ENCODE measurements at regions of chr10 and their contacts with region 1.

Region 1: GRCh38 chr10:10831085-10831484 is 186.6 kb upstream of the CELF2 start:
- DNase-seq: peak; percentile 96
- H3K4me3 ChIP-seq: peak overlapping the region in 1 of 3 experiments; percentile 2
- H3K27ac ChIP-seq: peak overlapping the region; percentile 98
- H3K4me1 ChIP-seq: peaks cover 23% of the 10 kb centered on the region
- H3K27me3 ChIP-seq: no peaks in the 10 kb centered on the region
- CTCF ChIP-seq: no peak
- POLR2A ChIP-seq: no peak

Region 2: DNA sequence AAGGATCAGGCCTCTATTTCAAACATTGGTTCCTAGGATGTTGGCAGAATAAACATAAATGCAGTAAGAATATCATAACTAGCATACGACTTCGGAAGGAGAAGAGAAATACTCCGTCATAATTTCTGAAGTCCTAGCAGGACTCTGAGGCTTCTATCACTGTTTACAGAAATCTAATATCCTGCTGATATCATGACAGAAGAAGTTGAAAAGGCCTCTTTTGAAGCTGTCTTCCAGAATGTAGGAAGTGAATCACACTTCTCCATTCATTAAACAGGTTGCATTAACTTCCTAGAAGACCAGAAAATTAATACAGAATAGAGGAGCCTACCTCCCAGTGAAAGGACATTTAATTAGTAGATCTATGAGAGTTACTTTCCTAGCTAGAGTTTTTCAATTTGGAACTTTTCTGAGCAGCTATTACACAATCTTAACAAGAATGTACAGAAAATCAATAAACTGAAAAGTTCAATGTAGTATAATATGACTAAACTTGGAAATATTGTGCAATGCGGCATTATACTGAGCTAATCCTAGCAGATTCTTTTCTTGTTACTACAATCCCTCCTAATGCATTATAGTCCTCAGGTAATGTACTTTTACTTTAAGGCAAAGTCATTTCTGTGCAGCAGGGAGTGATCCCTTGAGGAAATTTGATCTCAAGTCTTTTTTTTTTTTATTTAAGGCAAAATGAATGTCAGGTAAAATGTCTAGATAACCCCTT is 436.0 kb before region 1 on chr10:
- CTCF ChIA-PET with region 1: no interaction called
- POLR2A ChIA-PET with region 1: no interaction called
- dilution Hi-C with region 1: no loop called
- intact Hi-C with region 1: no loop called
- DNase-seq: no peak
- H3K4me3 ChIP-seq: no peak overlapping the region
- H3K27ac ChIP-seq: no peak overlapping the region
- H3K4me1 ChIP-seq: no peaks in the 10 kb centered on the region
- H3K27me3 ChIP-seq: no peaks in the 10 kb centered on the region
- CTCF ChIP-seq: no peak
- POLR2A ChIP-seq: no peak

Region 3: GRCh38 chr10:10677479-10677878 is 153.6 kb before region 1 on chr10:
- CTCF ChIA-PET with region 1: no interaction called
- POLR2A ChIA-PET with region 1: no interaction called
- dilution Hi-C with region 1: no loop called
- intact Hi-C with region 1: loop called (anchors 2 kb)
- DNase-seq: peak; percentile 50
- H3K4me3 ChIP-seq: no peak overlapping the region
- H3K27ac ChIP-seq: no peak overlapping the region
- H3K4me1 ChIP-seq: no peaks in the 10 kb centered on the region
- H3K27me3 ChIP-seq: no peaks in the 10 kb centered on the region
- CTCF ChIP-seq: peak; percentile 19 to 25
- POLR2A ChIP-seq: no peak

Region 4: DNA sequence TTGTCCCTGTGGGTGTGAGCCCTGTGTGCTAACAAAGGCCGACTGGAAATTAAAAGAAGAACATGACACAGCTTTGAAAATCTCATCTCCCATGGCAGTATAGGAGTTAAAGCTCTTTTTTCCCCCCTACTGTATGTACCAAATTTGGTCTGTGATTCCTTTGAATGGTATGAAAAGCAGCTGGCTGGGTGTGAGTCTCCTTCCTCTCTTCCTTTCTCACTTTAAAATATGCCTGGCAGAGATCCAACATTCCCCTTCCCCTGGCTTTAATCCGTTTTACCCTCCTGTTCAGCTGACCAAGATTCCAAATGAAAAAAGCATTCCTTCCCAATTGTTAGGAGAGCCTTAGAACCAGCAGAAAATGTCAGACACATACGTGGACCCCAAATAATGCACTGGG is 38.4 kb before region 1 on chr10:
- CTCF ChIA-PET with region 1: interaction called, 7 read pairs
- POLR2A ChIA-PET with region 1: interaction called, 9 read pairs
- dilution Hi-C with region 1: no loop called
- intact Hi-C with region 1: loop called (anchors 1 kb)
- DNase-seq: peak; percentile 89
- H3K4me3 ChIP-seq: no peak overlapping the region
- H3K27ac ChIP-seq: peak overlapping the region; percentile 98
- H3K4me1 ChIP-seq: peaks cover 43% of the 10 kb centered on the region
- H3K27me3 ChIP-seq: no peaks in the 10 kb centered on the region
- CTCF ChIP-seq: no peak
- POLR2A ChIP-seq: peak; percentile 53

Region 5: DNA sequence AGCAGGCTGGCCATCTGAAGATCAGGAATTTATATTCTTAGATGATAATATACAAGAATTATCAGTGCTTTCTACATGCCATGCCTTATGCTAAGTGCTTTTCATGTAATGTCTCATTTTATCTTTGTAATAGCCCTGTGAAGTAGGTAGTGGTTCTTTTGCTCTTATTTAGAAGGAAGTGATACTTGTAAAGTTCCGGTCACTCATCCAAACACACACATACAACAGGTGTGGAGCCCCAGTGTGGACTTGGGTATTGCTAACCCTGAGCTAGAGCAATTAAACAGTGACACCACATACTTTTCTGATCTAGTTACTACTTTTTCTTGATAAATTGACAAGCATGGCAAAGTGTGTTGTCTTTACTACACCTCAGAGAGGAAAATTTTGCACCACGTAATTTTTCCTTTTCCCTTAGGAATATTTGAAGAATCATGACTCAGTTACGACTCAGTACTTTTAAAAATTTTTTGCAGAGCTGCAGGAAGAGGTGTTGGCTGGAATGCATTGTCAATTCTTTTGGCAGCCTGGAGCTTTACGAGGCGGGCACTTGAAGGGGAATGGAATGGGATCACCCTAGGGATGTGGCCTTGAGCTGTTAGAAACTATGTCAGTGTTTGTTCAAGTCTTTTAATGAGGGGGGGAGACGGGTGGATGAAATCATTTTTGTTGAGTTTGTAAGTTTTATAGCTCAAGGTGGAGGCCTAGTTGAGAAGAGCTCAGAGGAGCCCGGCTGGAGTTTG is 25.9 kb before region 1 on chr10:
- CTCF ChIA-PET with region 1: interaction called, 11 read pairs
- POLR2A ChIA-PET with region 1: no interaction called
- dilution Hi-C with region 1: no loop called
- intact Hi-C with region 1: no loop called
- DNase-seq: peak; percentile 79
- H3K4me3 ChIP-seq: no peak overlapping the region
- H3K27ac ChIP-seq: peak overlapping the region; percentile 37
- H3K4me1 ChIP-seq: peaks cover 16% of the 10 kb centered on the region
- H3K27me3 ChIP-seq: no peaks in the 10 kb centered on the region
- CTCF ChIP-seq: no peak
- POLR2A ChIP-seq: no peak

Region 6: DNA sequence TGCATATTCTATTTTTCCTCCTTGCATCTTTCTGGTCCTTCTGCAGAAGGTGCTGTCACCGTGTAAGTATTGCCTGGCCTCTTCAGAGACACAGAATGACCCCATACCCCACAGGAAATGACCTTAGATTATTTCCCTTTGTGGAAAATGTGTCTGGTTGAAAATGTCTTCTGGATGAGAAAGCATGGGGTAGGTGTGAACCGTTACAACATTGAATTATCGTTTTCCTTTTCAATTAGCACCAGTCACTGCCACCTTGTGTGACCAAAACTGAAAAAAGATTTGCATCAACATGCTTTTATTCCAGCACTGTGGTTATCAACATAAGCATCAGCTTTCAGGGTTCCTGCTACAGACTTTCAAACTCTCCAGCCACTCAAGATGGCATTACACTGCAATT is 128.6 kb after region 1 on chr10:
- CTCF ChIA-PET with region 1: no interaction called
- POLR2A ChIA-PET with region 1: no interaction called
- dilution Hi-C with region 1: no loop called
- intact Hi-C with region 1: no loop called
- DNase-seq: no peak
- H3K4me3 ChIP-seq: no peak overlapping the region
- H3K27ac ChIP-seq: no peak overlapping the region
- H3K4me1 ChIP-seq: no peaks in the 10 kb centered on the region
- H3K27me3 ChIP-seq: no peaks in the 10 kb centered on the region
- CTCF ChIP-seq: no peak
- POLR2A ChIP-seq: no peak

Region 7: GRCh38 chr10:11017570-11018431 is 186.7 kb after region 1 on chr10 and contains the start of gene CELF2:
- CTCF ChIA-PET with region 1: no interaction called
- POLR2A ChIA-PET with region 1: no interaction called
- dilution Hi-C with region 1: no loop called
- intact Hi-C with region 1: loop called (anchors 1 kb)
- DNase-seq: peak; percentile 64
- H3K4me3 ChIP-seq: peak within 1 kb of the TSS; percentile 77 to 91 (median 88)
- H3K27ac ChIP-seq: peak within 1 kb of the TSS; percentile 71
- H3K4me1 ChIP-seq: peaks cover 9% of the 10 kb centered on the region
- H3K27me3 ChIP-seq: no peaks in the 10 kb centered on the region
- CTCF ChIP-seq: no peak
- POLR2A ChIP-seq: peak; percentile 26
- total RNA-seq, gene CELF2: 35.5 and 42.6 TPM in 2 replicates

Region 8: DNA sequence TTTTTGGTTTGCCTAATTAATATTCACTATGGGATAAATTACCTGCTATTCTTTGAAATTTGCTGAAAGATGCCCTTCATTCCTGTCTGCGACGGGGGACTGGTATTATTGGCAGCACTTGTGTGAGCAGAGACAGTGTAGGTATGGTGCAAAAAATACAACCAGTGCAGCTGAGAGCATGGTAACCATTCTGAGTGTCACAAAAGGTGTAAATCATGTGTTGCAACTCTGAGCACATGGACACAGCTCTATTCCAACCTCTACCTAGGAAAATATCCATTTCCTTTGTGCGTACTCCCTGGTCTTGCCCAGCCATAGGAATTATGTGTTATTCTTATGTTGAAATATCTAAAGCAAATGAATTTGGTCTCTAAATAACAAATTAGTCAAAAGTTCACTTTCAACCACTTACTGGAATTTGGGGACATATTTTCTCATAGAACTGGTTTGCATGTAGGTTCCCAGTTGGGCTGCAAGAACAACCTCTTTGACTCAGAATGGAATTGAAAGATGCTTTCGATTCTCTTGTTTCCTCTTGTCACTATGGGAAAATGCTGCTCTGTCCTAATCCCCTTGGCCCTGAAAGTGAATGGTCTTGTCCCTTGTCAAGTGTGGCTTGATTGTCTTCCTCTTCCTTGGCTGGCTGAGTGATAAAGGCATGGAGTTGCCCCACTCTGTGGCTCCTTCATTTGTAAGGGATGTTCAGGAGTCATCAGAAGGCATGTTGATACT is 243.6 kb after region 1 on chr10:
- CTCF ChIA-PET with region 1: no interaction called
- POLR2A ChIA-PET with region 1: no interaction called
- dilution Hi-C with region 1: no loop called
- intact Hi-C with region 1: no loop called
- DNase-seq: no peak
- H3K4me3 ChIP-seq: no peak overlapping the region
- H3K27ac ChIP-seq: no peak overlapping the region
- H3K4me1 ChIP-seq: no peaks in the 10 kb centered on the region
- H3K27me3 ChIP-seq: no peaks in the 10 kb centered on the region
- CTCF ChIP-seq: no peak
- POLR2A ChIP-seq: no peak

Region 9: GRCh38 chr10:11782793-11783557 is 951.9 kb after region 1 on chr10:
- CTCF ChIA-PET with region 1: no interaction called
- POLR2A ChIA-PET with region 1: no interaction called
- dilution Hi-C with region 1: no loop called
- intact Hi-C with region 1: no loop called
- DNase-seq: peak; percentile 64
- H3K4me3 ChIP-seq: no peak overlapping the region
- H3K27ac ChIP-seq: no peak overlapping the region
- H3K4me1 ChIP-seq: no peaks in the 10 kb centered on the region
- H3K27me3 ChIP-seq: peaks cover 0 to 4% of the 10 kb centered on the region in 2 experiments
- CTCF ChIP-seq: peak; percentile 45 to 55
- POLR2A ChIP-seq: no peak

Measured in endothelial cell of umbilical vein (primary cell).